H1 (cell line): ENCODE measurements at regions of chr15 and their contacts with region 1.

Region 1: GRCh38 chr15:66907826-66908743 is 157.3 kb upstream of the SMAD3 start:
- DNase-seq: no peak
- H3K4me3 ChIP-seq: no peak overlapping the region
- H3K27ac ChIP-seq: no peak overlapping the region
- H3K4me1 ChIP-seq: peaks cover 0 to 3% (median 0%) of the 10 kb centered on the region in 4 experiments; a peak in 1 of 7 replicates
- H3K27me3 ChIP-seq: no peaks in the 10 kb centered on the region
- CTCF ChIP-seq: no peak
- EP300 ChIP-seq: no peak
- POLR2A ChIP-seq: no peak
- RAD21 ChIP-seq: no peak

Region 2: GRCh38 chr15:66827039-66827697 is 80.9 kb before region 1 on chr15:
- CTCF ChIA-PET with region 1: no interaction called
- POLR2A ChIA-PET with region 1: no interaction called
- DNase-seq: no peak
- H3K4me3 ChIP-seq: no peak overlapping the region; a peak in 1 of 8 replicates
- H3K27ac ChIP-seq: 0 out of 2 replicates have a peak overlapping the region, but pooled peaks have one; percentile 15
- H3K4me1 ChIP-seq: peaks cover 0 to 18% (median 7%) of the 10 kb centered on the region in 4 experiments; a peak in 6 of 7 replicates
- H3K27me3 ChIP-seq: no peaks in the 10 kb centered on the region
- CTCF ChIP-seq: no peak
- EP300 ChIP-seq: no peak; a peak in 1 of 3 replicates
- POLR2A ChIP-seq: no peak
- RAD21 ChIP-seq: no peak

Region 3: GRCh38 chr15:66877477-66878271 is 30.4 kb before region 1 on chr15:
- CTCF ChIA-PET with region 1: interaction called, 27 read pairs
- POLR2A ChIA-PET with region 1: interaction called, 3 read pairs
- DNase-seq: peak in 1 of 2 experiments; percentile 39
- H3K4me3 ChIP-seq: no peak overlapping the region
- H3K27ac ChIP-seq: no peak overlapping the region
- H3K4me1 ChIP-seq: peaks cover 0 to 3% (median 0%) of the 10 kb centered on the region in 4 experiments; a peak in 1 of 7 replicates
- H3K27me3 ChIP-seq: no peaks in the 10 kb centered on the region
- CTCF ChIP-seq: no peak
- EP300 ChIP-seq: no peak
- POLR2A ChIP-seq: no peak
- RAD21 ChIP-seq: no peak

Region 4: DNA sequence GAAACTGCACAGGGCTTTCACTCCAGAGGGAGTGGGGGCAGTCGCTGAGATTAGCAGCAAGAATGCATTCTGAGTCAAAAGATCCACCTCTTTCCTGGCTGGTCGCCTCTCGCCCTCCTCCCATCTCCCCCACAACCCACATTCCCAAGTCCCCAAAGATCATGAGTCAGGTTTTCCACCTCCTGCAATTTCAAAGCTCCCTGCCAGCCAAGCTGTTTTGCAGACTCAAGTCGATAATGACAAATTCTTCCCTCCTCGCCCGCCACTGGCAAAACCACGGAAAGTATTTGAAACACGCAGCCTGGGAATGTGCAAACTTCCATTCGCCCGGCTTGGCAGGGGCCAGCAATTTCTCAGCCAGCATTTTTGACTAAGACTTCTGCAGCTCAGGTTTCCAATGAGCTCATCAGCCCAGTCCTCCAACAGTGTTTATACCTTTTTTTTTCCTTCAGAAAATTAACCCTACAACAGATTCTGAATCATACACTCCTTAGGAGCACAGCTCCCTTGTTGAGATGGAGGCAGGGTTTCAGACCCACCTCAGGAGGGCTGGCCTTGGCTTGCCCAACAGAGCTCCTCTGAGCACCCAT is 24.7 kb before region 1 on chr15:
- CTCF ChIA-PET with region 1: interaction called, 27 read pairs
- POLR2A ChIA-PET with region 1: interaction called, 3 read pairs
- DNase-seq: peak; percentile 58 to 89
- H3K4me3 ChIP-seq: no peak overlapping the region
- H3K27ac ChIP-seq: 0 out of 2 replicates have a peak overlapping the region, but pooled peaks have one; percentile 21
- H3K4me1 ChIP-seq: peaks cover 0 to 9% (median 4%) of the 10 kb centered on the region in 4 experiments; a peak in 5 of 7 replicates
- H3K27me3 ChIP-seq: no peaks in the 10 kb centered on the region
- CTCF ChIP-seq: no peak
- EP300 ChIP-seq: peak in 1 of 2 experiments; percentile 38; a peak in 1 of 3 replicates
- POLR2A ChIP-seq: peak in 1 of 2 experiments; percentile 50; a peak in 1 of 3 replicates
- RAD21 ChIP-seq: no peak

Region 5: DNA sequence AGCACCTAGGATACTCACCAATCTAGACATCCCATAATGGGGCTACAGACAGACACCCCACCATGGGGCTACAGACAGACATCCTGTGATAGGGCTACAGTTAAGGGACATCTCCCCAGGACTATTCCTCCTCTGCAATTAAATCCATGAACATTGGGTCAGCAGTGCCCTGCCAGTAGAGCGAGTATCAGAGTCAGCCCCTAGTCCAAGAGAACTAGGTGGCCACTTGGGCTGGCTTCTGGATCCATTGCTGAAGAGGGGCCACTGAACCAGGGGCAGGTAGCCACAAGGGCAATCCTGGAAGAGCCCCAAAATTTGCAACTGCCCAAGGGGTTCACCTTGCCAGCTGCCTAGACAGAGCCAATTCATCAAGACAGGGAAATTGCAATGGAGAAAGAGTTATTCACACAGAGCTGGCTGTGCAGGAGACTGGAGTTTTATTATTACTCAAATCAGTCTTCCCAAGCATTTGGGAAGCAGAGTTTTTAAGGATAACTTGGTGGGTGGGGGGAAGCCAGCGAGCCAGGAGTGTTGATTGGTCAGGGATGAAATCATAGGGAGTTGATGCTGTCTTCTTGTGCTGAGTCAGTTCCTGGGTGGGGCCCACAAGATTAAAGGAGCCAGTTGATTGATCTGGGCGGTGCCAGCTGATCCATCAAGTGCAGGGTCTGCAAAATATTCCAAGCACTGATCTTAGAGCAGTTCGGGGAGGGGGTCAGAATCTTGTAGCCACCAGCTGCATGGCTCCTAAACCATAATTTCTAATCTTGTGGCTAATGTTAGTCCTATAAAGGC is 12.9 kb before region 1 on chr15:
- CTCF ChIA-PET with region 1: interaction called, 255 read pairs
- POLR2A ChIA-PET with region 1: interaction called, 4 read pairs
- DNase-seq: peak in 1 of 2 experiments; percentile 30
- H3K4me3 ChIP-seq: no peak overlapping the region
- H3K27ac ChIP-seq: no peak overlapping the region
- H3K4me1 ChIP-seq: peaks cover 0 to 5% (median 2%) of the 10 kb centered on the region in 4 experiments; a peak in 3 of 7 replicates
- H3K27me3 ChIP-seq: peaks cover 0 to 3% (median 0%) of the 10 kb centered on the region in 4 experiments; a peak in 1 of 7 replicates
- CTCF ChIP-seq: no peak
- EP300 ChIP-seq: no peak
- POLR2A ChIP-seq: no peak
- RAD21 ChIP-seq: no peak

Region 6: GRCh38 chr15:66923438-66923881 is 15.4 kb after region 1 on chr15:
- CTCF ChIA-PET with region 1: interaction called, 255 read pairs
- POLR2A ChIA-PET with region 1: interaction called, 3 read pairs
- DNase-seq: peak in 1 of 2 experiments; percentile 87
- H3K4me3 ChIP-seq: no peak overlapping the region
- H3K27ac ChIP-seq: no peak overlapping the region
- H3K4me1 ChIP-seq: no peaks in the 10 kb centered on the region; a peak in 1 of 7 replicates
- H3K27me3 ChIP-seq: no peaks in the 10 kb centered on the region; a peak in 1 of 7 replicates
- CTCF ChIP-seq: peak; percentile 83 to 98 (median 94)
- EP300 ChIP-seq: no peak
- POLR2A ChIP-seq: no peak
- RAD21 ChIP-seq: peak; percentile 54 to 72; a peak in 3 of 4 replicates

Region 7: GRCh38 chr15:66931768-66932633 is 23.9 kb after region 1 on chr15:
- CTCF ChIA-PET with region 1: interaction called, 255 read pairs
- POLR2A ChIA-PET with region 1: interaction called, 3 read pairs
- DNase-seq: no peak
- H3K4me3 ChIP-seq: no peak overlapping the region
- H3K27ac ChIP-seq: 0 out of 2 replicates have a peak overlapping the region, but pooled peaks have one; percentile 30
- H3K4me1 ChIP-seq: peaks cover 0 to 10% (median 5%) of the 10 kb centered on the region in 4 experiments; a peak in 4 of 7 replicates
- H3K27me3 ChIP-seq: no peaks in the 10 kb centered on the region
- CTCF ChIP-seq: no peak
- EP300 ChIP-seq: no peak
- POLR2A ChIP-seq: no peak
- RAD21 ChIP-seq: no peak

Region 8: DNA sequence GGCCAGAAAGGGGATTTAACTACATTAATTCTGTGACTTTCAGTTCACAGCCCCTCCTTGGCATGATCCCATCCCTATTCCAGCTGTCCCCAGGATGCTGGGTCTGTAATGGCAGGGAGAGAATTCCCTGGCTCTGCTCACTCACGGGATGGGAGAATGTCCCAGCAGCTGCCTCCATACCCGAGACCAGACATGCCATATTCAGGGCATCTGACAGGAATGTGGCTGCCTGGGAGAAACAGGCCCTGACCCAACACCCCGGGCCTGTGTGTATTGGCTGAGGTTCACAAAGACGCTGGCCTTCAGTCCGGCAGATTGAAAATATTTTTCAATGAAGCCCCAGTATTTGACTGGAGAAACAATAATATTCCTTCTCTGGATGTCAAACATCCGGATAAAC is 73.7 kb after region 1 on chr15:
- CTCF ChIA-PET with region 1: no interaction called
- POLR2A ChIA-PET with region 1: no interaction called
- DNase-seq: no peak
- H3K4me3 ChIP-seq: no peak overlapping the region
- H3K27ac ChIP-seq: no peak overlapping the region
- H3K4me1 ChIP-seq: no peaks in the 10 kb centered on the region
- H3K27me3 ChIP-seq: no peaks in the 10 kb centered on the region; a peak in 1 of 7 replicates
- CTCF ChIP-seq: no peak
- EP300 ChIP-seq: no peak
- POLR2A ChIP-seq: no peak
- RAD21 ChIP-seq: no peak